Activated B cell treated with CpG ODN at 0.5 μM for 24 hours (primary cell): ENCODE measurements at regions of chr7 and their contacts with region 1.

Region 1: DNA sequence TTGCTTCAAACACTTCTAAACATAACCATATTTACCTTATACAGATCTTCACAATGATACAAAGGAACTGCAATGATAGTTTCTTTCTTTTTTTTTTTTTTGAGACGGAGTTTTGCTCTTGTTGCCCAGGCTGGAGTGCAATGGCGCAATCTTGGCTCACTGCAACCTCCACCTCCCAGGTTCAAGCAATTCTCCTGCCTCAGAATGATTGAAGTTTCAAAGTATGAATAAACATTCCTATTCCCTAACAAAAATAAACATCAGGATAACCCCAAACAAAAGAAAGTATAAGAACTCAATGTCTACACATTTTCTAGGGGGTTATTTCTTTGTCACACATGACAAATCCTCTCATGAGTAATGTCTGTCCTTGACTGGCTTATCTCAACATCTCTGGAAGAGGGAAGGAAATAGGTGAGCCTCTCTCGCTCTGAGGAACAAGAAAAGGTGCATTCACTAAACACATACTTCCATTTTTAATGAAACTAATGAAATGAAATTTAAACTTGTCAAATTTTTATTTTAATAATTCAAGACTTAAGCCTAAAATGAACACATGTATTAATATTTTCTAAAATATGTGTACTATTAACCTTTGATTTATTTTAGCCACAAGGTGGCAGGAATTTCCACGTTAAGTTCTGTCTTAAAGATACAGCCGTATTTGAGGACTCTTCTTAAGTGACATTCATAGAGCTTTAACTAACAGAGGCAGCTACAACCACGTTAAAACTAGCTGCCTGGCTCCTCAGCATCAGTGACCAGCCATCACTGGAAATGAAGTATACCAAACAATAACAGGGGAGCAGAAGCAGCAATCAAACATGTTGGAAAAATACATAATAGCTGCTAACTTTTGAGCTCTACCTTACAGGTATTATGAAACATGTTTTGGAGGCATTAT is 58.3 kb downstream of the MALSU1 start:
- DNase-seq: no peak
- ATAC-seq: peak; percentile 87
- H3K4me3 Mint-ChIP-seq: no peak overlapping the region
- H3K27ac Mint-ChIP-seq: no peak overlapping the region
- H3K4me1 Mint-ChIP-seq: peaks cover 20% of the 10 kb centered on the region
- H3K27me3 Mint-ChIP-seq: no peaks in the 10 kb centered on the region
- CTCF ChIP-seq: peak; percentile 22

Region 2: GRCh38 chr7:23315366-23315765 is 42.1 kb before region 1 on chr7:
- CTCF ChIA-PET with region 1: no interaction called
- POLR2A ChIA-PET with region 1: no interaction called
- intact Hi-C with region 1: no loop called
- DNase-seq: no peak
- ATAC-seq: no peak
- H3K4me3 Mint-ChIP-seq: no peak overlapping the region
- H3K27ac Mint-ChIP-seq: no peak overlapping the region
- H3K4me1 Mint-ChIP-seq: no peaks in the 10 kb centered on the region
- H3K27me3 Mint-ChIP-seq: no peaks in the 10 kb centered on the region
- CTCF ChIP-seq: no peak

Region 3: GRCh38 chr7:23410446-23411183 is 53.2 kb after region 1 on chr7:
- CTCF ChIA-PET with region 1: interaction called, 12 read pairs
- POLR2A ChIA-PET with region 1: interaction called, 3 read pairs
- intact Hi-C with region 1: no loop called
- DNase-seq: no peak
- ATAC-seq: peak; percentile 93
- H3K4me3 Mint-ChIP-seq: peak overlapping the region; percentile 2
- H3K27ac Mint-ChIP-seq: peak overlapping the region; percentile 79
- H3K4me1 Mint-ChIP-seq: peaks cover 28% of the 10 kb centered on the region
- H3K27me3 Mint-ChIP-seq: no peaks in the 10 kb centered on the region
- CTCF ChIP-seq: no peak

Region 4: GRCh38 chr7:23462846-23463245 is 105.4 kb after region 1 on chr7:
- CTCF ChIA-PET with region 1: interaction called, 4 read pairs
- POLR2A ChIA-PET with region 1: interaction called, 5 read pairs
- intact Hi-C with region 1: loop called (anchors 1 kb)
- DNase-seq: no peak
- ATAC-seq: peak; percentile 52
- H3K4me3 Mint-ChIP-seq: no peak overlapping the region
- H3K27ac Mint-ChIP-seq: no peak overlapping the region
- H3K4me1 Mint-ChIP-seq: peaks cover 20% of the 10 kb centered on the region
- H3K27me3 Mint-ChIP-seq: peaks cover 29% of the 10 kb centered on the region
- CTCF ChIP-seq: no peak

Region 5: GRCh38 chr7:23491503-23491902 is 134.1 kb after region 1 on chr7:
- CTCF ChIA-PET with region 1: no interaction called
- POLR2A ChIA-PET with region 1: no interaction called
- intact Hi-C with region 1: no loop called
- DNase-seq: no peak
- ATAC-seq: no peak
- H3K4me3 Mint-ChIP-seq: peak overlapping the region; percentile 87
- H3K27ac Mint-ChIP-seq: peak overlapping the region; percentile 18
- H3K4me1 Mint-ChIP-seq: peaks cover 5% of the 10 kb centered on the region
- H3K27me3 Mint-ChIP-seq: no peaks in the 10 kb centered on the region
- CTCF ChIP-seq: no peak

Region 6: DNA sequence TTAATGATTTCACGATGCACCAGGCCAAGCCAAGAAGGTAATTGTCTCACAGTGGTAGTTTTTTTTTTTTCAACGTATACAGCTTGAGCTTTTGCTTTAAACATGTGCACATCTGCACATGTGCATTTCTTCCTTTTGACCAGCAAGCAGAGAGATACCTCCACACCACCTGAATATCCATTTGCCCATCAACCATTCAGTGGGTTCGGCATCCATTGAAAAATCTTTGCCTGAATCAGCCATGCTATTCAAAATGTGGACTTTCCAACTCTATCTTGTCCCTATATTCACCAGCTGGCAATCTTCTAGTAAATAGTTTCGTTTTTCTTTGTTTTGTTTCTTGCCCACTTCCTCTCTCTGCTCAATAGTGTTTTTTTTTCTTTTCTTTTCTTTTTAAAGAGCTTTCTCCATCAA is 182.1 kb after region 1 on chr7:
- CTCF ChIA-PET with region 1: interaction called, 42 read pairs
- POLR2A ChIA-PET with region 1: no interaction called
- intact Hi-C with region 1: no loop called
- DNase-seq: no peak
- ATAC-seq: no peak
- H3K4me3 Mint-ChIP-seq: peak overlapping the region; percentile 21
- H3K27ac Mint-ChIP-seq: peak overlapping the region; percentile 53
- H3K4me1 Mint-ChIP-seq: peaks cover 15% of the 10 kb centered on the region
- H3K27me3 Mint-ChIP-seq: no peaks in the 10 kb centered on the region
- CTCF ChIP-seq: no peak

Region 7: GRCh38 chr7:23712368-23713284 is 355.2 kb after region 1 on chr7:
- CTCF ChIA-PET with region 1: interaction called, 7 read pairs
- POLR2A ChIA-PET with region 1: no interaction called
- intact Hi-C with region 1: loop called (anchors 1 kb)
- DNase-seq: no peak
- ATAC-seq: no peak
- H3K4me3 Mint-ChIP-seq: no peak overlapping the region
- H3K27ac Mint-ChIP-seq: no peak overlapping the region
- H3K4me1 Mint-ChIP-seq: no peaks in the 10 kb centered on the region
- H3K27me3 Mint-ChIP-seq: no peaks in the 10 kb centered on the region
- CTCF ChIP-seq: no peak

Region 8: GRCh38 chr7:23956772-23957556 is 599.5 kb after region 1 on chr7:
- CTCF ChIA-PET with region 1: no interaction called
- POLR2A ChIA-PET with region 1: no interaction called
- intact Hi-C with region 1: no loop called
- DNase-seq: no peak
- ATAC-seq: no peak
- H3K4me3 Mint-ChIP-seq: no peak overlapping the region
- H3K27ac Mint-ChIP-seq: no peak overlapping the region
- H3K4me1 Mint-ChIP-seq: no peaks in the 10 kb centered on the region
- H3K27me3 Mint-ChIP-seq: peaks cover 5% of the 10 kb centered on the region
- CTCF ChIP-seq: no peak